A549 (cell line): ENCODE measurements at regions of chrX and their contacts with region 1.

Region 1: DNA sequence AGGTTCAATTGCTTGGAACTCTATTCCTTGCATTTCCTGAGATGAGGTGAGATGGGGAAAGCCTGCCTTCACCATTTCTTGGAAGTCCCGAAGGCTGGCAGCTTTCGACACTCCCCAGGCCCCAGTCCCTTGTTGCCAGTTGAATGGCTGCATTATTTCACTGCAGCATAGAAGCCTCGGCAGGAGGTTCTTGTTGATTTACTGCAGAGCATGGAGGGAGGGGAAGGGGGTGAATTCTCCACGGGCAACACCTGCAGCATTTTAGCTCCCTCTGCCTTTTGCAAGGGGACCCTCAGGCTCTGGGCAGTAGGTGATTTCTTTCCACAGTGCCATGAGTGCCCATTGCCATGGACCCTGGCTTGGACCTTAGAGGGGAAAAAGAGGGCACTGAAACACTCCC is 10.7 kb upstream of the BCLAF3 start:
- DNase-seq: no peak
- ATAC-seq: no peak
- H3K4me3 ChIP-seq: no peak overlapping the region
- H3K27ac ChIP-seq: no peak overlapping the region
- H3K4me1 ChIP-seq: no peaks in the 10 kb centered on the region
- CTCF ChIP-seq: no peak
- EP300 ChIP-seq: no peak
- POLR2A ChIP-seq: no peak
- RAD21 ChIP-seq: no peak

Region 2: DNA sequence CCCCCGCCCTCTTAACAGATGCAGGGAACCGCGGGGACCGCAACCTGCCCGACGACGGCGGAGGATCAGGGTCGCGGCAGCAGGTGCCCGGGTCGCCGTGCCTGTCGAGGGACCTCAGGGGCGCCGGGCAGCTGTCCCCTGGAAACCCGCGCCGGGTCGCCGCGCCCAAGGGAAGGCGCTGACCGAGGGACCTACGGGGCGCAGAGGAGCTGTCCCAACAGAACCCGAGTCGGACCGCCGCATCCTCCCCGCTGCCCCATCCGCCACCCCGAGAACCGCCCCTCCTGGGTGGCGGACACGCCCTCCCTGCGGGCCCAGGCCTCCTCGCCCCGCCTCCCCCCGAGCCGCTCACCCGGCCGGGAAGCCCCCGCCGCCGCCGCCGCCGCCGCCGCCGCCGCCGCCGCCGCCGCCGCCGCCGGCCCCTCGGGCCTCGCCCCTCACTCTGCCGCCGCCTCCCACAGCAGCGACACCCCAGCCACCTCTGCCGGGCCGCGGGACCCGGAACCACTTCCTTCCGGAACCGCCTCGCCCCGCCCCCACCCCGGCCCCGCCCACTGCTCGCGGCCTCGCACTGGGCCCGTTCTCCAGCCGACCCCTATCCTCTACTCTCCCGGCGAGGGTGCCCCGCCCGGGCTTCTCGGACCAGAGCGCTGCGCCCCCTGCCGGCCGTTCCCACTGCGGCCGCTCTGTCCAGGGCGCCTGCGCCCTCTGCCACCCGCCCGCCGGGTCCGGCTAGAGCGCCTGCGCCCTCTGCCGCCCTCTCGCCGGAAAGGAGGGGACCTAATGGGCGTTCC is 10.8 kb before region 1 on chrX and contains the start of gene BCLAF3:
- CTCF ChIA-PET with region 1: interaction called, 19 read pairs
- POLR2A ChIA-PET with region 1: no interaction called
- DNase-seq: peak; percentile 85 to 90
- ATAC-seq: peak; percentile 95 to 98
- H3K4me3 ChIP-seq: peak within 1 kb of the TSS; percentile 76
- H3K27ac ChIP-seq: peak within 1 kb of the TSS; percentile 90 to 97
- H3K4me1 ChIP-seq: peaks cover 20% of the 10 kb centered on the region; the same call in 2 of the 3 replicates
- CTCF ChIP-seq: peak; percentile 82
- EP300 ChIP-seq: no peak
- POLR2A ChIP-seq: no peak
- RAD21 ChIP-seq: peak; percentile 32 to 70
- polyA plus RNA-seq, gene BCLAF3: 4.1 TPM in 2 replicates